H1 (cell line): ENCODE measurements at regions of chr15 and their contacts with region 1.

Region 1: GRCh38 chr15:34241372-34242330 is 16.8 kb downstream of the EMC4 start:
- DNase-seq: no peak
- H3K4me3 ChIP-seq: no peak overlapping the region
- H3K27ac ChIP-seq: no peak overlapping the region
- H3K4me1 ChIP-seq: peaks cover 0 to 3% (median under 1%) of the 10 kb centered on the region in 4 experiments; a peak in 3 of 7 replicates
- H3K27me3 ChIP-seq: peaks cover 0 to 1% (median 0%) of the 10 kb centered on the region in 4 experiments; a peak in 1 of 7 replicates
- CTCF ChIP-seq: peak in 2 of 3 experiments; percentile 35 to 67; a peak in 2 of 4 replicates
- EP300 ChIP-seq: no peak
- POLR2A ChIP-seq: no peak
- RAD21 ChIP-seq: peak; percentile 38 to 41

Region 2: DNA sequence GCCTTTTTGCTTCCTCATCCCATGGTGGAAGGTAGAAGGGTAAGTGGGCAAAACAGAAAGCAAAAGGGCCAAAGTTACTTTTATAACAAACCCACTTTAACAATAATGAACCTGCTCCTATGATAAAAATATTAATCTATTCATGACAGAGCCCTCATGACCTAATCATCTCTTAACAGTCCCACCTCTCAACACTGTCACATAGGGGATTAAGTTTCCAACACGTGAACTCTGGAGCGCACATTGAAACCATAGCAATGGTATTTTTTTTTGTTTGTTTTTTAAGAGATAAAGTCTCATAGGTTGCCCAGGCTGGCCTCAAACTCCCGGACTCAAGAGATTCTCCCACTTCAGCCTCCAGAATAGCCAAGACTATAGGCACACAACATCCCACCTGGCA is 62.4 kb before region 1 on chr15:
- CTCF ChIA-PET with region 1: no interaction called
- POLR2A ChIA-PET with region 1: no interaction called
- DNase-seq: no peak
- H3K4me3 ChIP-seq: no peak overlapping the region
- H3K27ac ChIP-seq: no peak overlapping the region
- H3K4me1 ChIP-seq: peaks cover 0 to 2% (median 0%) of the 10 kb centered on the region in 4 experiments; a peak in 1 of 7 replicates
- H3K27me3 ChIP-seq: no peaks in the 10 kb centered on the region
- CTCF ChIP-seq: no peak
- EP300 ChIP-seq: no peak
- POLR2A ChIP-seq: no peak
- RAD21 ChIP-seq: no peak

Region 3: DNA sequence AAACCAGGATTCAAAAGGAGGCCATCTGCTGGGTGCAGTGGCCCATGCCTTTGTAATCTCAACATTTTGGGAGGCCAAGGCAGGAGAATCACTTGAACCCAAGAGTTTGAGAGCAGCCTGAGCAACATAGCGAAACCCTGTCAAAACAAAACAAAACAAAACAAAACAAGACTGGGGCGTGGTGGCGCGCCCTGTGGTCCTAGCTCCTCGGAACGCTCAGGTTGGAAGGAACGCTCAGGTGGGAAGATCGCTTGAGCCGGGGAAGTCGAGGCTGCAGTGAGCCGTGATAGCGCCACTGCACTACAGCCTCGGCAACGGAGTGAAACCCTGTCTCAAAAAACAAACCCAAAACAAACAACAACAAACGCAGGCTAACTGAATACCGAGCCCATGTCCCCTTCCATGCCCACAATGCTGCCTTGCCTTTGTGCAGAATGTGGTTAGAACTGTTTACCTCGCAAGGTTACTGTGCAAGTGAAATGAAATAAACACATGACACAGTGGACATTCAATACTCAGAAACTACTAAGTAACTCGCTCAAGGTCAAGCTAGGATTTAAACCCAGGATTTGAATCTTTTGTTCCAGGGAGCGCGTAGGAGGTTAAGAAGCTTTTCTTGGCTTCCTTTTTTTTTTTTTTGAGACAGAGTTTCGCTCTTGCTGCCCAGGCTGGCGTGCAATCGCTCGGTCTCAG is 17.6 kb before region 1 on chr15:
- CTCF ChIA-PET with region 1: interaction called, 16 read pairs
- POLR2A ChIA-PET with region 1: interaction called, 4 read pairs
- DNase-seq: no peak
- H3K4me3 ChIP-seq: peak overlapping the region; percentile 85 to 100 (median 94); a peak in 7 of 8 replicates
- H3K27ac ChIP-seq: peak overlapping the region; percentile 82
- H3K4me1 ChIP-seq: peaks cover 0 to 4% (median 3%) of the 10 kb centered on the region in 4 experiments; a peak in 4 of 7 replicates
- H3K27me3 ChIP-seq: no peaks in the 10 kb centered on the region
- CTCF ChIP-seq: no peak
- EP300 ChIP-seq: no peak
- POLR2A ChIP-seq: no peak; a peak in 1 of 3 replicates
- RAD21 ChIP-seq: no peak

Region 4: DNA sequence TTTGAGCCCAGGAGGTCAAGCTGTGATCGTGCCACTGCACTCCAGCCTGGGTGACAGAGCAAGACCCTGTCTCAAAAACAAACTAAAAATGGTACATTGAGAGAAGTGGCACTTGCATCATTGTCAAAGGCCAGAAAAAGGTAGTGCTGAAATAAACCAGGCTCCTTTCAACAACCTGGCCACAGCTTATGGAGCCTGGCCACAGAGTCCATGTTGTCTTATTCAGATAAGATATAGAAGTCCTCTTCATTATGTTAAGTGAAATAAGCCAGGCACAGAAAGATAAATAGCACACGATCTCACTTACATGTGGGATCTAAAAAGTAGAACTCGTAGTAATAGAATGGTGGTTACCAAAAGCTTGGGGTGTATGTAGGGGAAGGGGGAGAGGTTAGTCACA is 17.9 kb after region 1 on chr15:
- CTCF ChIA-PET with region 1: interaction called, 41 read pairs
- POLR2A ChIA-PET with region 1: interaction called, 3 read pairs
- DNase-seq: no peak
- H3K4me3 ChIP-seq: no peak overlapping the region
- H3K27ac ChIP-seq: no peak overlapping the region
- H3K4me1 ChIP-seq: no peaks in the 10 kb centered on the region
- H3K27me3 ChIP-seq: no peaks in the 10 kb centered on the region
- CTCF ChIP-seq: no peak
- EP300 ChIP-seq: no peak
- POLR2A ChIP-seq: no peak
- RAD21 ChIP-seq: no peak